GM12878 (cell line): ENCODE measurements at regions of chrX and their contacts with region 1.

Region 1: DNA sequence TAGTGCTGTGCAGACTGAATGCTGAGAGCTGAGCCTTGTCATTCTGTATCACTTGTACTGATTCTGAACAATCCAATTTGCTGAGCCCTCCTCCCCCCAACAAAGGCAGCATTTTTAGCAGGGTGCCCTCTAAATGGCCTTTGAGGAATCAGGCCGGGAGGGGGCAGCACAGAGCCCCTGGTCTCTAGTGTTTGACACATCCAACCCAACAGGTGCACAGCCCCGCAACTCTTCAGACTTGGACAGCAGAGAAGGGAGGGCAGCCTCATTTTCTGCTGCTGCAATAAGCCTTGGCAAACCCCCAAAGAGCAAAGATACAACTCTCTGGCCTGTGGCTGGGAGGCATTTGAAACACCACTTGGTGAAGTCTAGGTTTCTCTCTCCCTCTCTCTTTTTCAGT is 3.4 kb downstream of the ATP1B4 start:
- DNase-seq: no peak
- ATAC-seq: peak; percentile 92
- H3K4me3 ChIP-seq: no peak overlapping the region
- H3K27ac ChIP-seq: no peak overlapping the region
- H3K4me1 ChIP-seq: no peaks in the 10 kb centered on the region
- H3K27me3 ChIP-seq: no peaks in the 10 kb centered on the region
- CTCF ChIP-seq: peak; percentile 42 to 63 (median 63); a peak in 5 of 6 replicates
- EP300 ChIP-seq: no peak
- POLR2A ChIP-seq: no peak
- RAD21 ChIP-seq: peak; percentile 50

Region 2: GRCh38 chrX:120111611-120112010 is 253.7 kb before region 1 on chrX:
- CTCF ChIA-PET with region 1: no interaction called
- POLR2A ChIA-PET with region 1: no interaction called
- RAD21 ChIA-PET with region 1: no interaction called
- SMC1A ChIA-PET with region 1: no interaction called
- in situ Hi-C with region 1: no loop called
- intact Hi-C with region 1: no loop called
- DNase-seq: no peak
- ATAC-seq: no peak
- H3K4me3 ChIP-seq: no peak overlapping the region
- H3K27ac ChIP-seq: no peak overlapping the region
- H3K4me1 ChIP-seq: no peaks in the 10 kb centered on the region
- H3K27me3 ChIP-seq: no peaks in the 10 kb centered on the region
- CTCF ChIP-seq: no peak
- EP300 ChIP-seq: no peak
- POLR2A ChIP-seq: no peak
- RAD21 ChIP-seq: no peak

Region 3: DNA sequence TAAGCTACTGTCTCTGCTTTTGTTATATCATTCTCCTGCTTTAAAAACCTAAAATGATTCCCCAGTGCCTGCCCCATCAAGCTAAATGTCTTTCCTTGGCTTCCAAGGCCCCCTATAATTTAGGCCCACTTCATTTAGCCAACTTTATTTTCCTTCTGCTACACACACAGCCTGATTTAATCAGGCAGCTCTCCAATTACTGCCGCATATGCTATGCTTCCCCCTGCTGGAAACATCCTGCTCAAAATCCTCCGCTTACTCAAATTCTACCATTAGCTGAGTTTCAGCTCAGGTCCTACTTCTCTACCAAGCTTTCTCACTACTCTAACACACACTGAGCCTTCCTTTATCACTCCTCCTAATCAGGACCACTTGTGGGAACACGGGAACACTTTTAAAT is 86.8 kb after region 1 on chrX:
- CTCF ChIA-PET with region 1: interaction called, 12 read pairs
- POLR2A ChIA-PET with region 1: no interaction called
- RAD21 ChIA-PET with region 1: no interaction called
- SMC1A ChIA-PET with region 1: no interaction called
- in situ Hi-C with region 1: no loop called
- intact Hi-C with region 1: loop called (anchors 5 kb)
- DNase-seq: no peak
- ATAC-seq: 0 out of 3 replicates have a peak, but pooled peaks have one; percentile 22
- H3K4me3 ChIP-seq: no peak overlapping the region
- H3K27ac ChIP-seq: no peak overlapping the region
- H3K4me1 ChIP-seq: peaks cover 3% of the 10 kb centered on the region
- H3K27me3 ChIP-seq: no peaks in the 10 kb centered on the region
- CTCF ChIP-seq: 0 out of 6 replicates have a peak, but pooled peaks of 2 of the 3 experiments have one; percentile 8 to 19
- EP300 ChIP-seq: no peak
- POLR2A ChIP-seq: no peak
- RAD21 ChIP-seq: peak; percentile 43

Region 4: DNA sequence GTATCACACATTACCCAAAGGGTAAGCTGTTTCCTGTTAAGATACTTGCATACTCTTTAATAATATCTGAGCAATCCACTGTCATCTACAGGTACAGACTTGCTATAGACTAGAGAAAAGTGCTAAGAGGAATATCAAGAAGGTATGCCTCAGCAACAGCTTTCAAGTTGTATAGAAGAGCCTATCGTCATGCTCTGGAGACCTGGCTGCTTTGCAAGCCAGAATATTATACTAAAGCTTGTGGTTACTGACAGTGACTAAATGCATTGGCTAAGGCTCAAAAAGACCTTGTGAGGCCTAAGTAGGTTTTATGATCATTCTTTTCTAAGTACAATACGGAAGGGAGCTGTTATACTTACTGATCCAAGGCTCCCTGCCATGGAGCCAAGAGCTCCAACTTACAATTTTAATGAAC is 92.5 kb after region 1 on chrX:
- CTCF ChIA-PET with region 1: interaction called, 12 read pairs
- POLR2A ChIA-PET with region 1: no interaction called
- RAD21 ChIA-PET with region 1: no interaction called
- SMC1A ChIA-PET with region 1: no interaction called
- in situ Hi-C with region 1: no loop called
- intact Hi-C with region 1: loop called (anchors 5 kb)
- DNase-seq: peak; percentile 12
- ATAC-seq: peak; percentile 86
- H3K4me3 ChIP-seq: no peak overlapping the region
- H3K27ac ChIP-seq: peak overlapping the region; percentile 12; the same call in 1 of the 2 replicates
- H3K4me1 ChIP-seq: peaks cover 10% of the 10 kb centered on the region
- H3K27me3 ChIP-seq: no peaks in the 10 kb centered on the region
- CTCF ChIP-seq: no peak
- EP300 ChIP-seq: no peak
- POLR2A ChIP-seq: no peak
- RAD21 ChIP-seq: no peak

Region 5: GRCh38 chrX:120477453-120477852 is 112.1 kb after region 1 on chrX:
- CTCF ChIA-PET with region 1: interaction called, 13 read pairs
- POLR2A ChIA-PET with region 1: no interaction called
- RAD21 ChIA-PET with region 1: no interaction called
- SMC1A ChIA-PET with region 1: interaction called, 7 read pairs
- in situ Hi-C with region 1: loop called (anchors 5 kb)
- intact Hi-C with region 1: loop called (anchors 5 kb)
- DNase-seq: no peak
- ATAC-seq: no peak
- H3K4me3 ChIP-seq: no peak overlapping the region
- H3K27ac ChIP-seq: no peak overlapping the region
- H3K4me1 ChIP-seq: no peaks in the 10 kb centered on the region
- H3K27me3 ChIP-seq: no peaks in the 10 kb centered on the region
- CTCF ChIP-seq: no peak
- EP300 ChIP-seq: no peak
- POLR2A ChIP-seq: no peak
- RAD21 ChIP-seq: no peak